Panc1 (cell line): ENCODE measurements at regions of chr4 and their contacts with region 1.

Region 1: DNA sequence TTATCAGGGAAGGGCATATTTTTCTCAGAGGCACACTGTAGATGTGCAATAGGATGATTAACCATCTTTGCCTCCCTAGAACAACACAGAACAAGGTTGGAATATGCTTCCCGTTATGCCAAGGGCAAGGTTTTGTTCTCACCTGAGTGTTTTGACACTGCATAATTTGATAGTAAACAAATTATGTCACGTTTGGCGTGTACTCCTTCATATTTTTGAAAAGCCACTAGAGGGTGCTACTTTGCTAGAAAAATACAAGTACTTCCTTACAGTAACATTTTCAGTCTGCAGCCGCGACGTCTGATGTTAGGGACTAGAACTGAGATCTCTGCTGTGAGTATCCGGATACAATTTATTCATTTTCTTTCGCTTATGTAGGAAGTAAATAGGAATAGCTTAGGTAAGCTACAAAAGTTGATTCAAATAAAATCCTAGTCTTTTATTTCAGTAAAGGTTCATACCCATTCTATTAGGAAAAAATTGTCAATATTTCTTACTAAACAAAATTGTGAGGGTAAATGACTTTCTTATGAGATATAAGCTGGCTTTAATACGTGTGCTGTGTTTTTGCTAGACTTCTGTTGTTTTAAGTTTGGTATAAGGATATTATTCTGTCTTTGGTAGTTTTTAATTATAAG is 181.1 kb upstream of the WDFY3 start:
- DNase-seq: peak; percentile 39
- ATAC-seq: peak; percentile 92
- H3K4me3 ChIP-seq: no peak overlapping the region
- H3K27ac ChIP-seq: peak overlapping the region; percentile 69; the same call in 1 of the 2 replicates
- H3K4me1 ChIP-seq: peaks cover 3% of the 10 kb centered on the region; the same call in 1 of the 2 replicates
- H3K27me3 ChIP-seq: no peaks in the 10 kb centered on the region
- CTCF ChIP-seq: peak; percentile 58; the same call in 1 of the 2 replicates

Region 2: GRCh38 chr4:85107553-85107952 is 40.0 kb before region 1 on chr4:
- CTCF ChIA-PET with region 1: no interaction called
- POLR2A ChIA-PET with region 1: no interaction called
- in situ Hi-C with region 1: no loop called
- intact Hi-C with region 1: no loop called
- DNase-seq: no peak
- ATAC-seq: no peak
- H3K4me3 ChIP-seq: no peak overlapping the region
- H3K27ac ChIP-seq: no peak overlapping the region
- H3K4me1 ChIP-seq: no peaks in the 10 kb centered on the region
- H3K27me3 ChIP-seq: no peaks in the 10 kb centered on the region
- CTCF ChIP-seq: no peak

Region 3: GRCh38 chr4:85370430-85371032 is 223.0 kb after region 1 on chr4:
- CTCF ChIA-PET with region 1: no interaction called
- POLR2A ChIA-PET with region 1: no interaction called
- in situ Hi-C with region 1: no loop called
- intact Hi-C with region 1: loop called (anchors 2 kb)
- DNase-seq: peak; percentile 35
- ATAC-seq: peak; percentile 85
- H3K4me3 ChIP-seq: no peak overlapping the region
- H3K27ac ChIP-seq: no peak overlapping the region
- H3K4me1 ChIP-seq: no peaks in the 10 kb centered on the region
- H3K27me3 ChIP-seq: no peaks in the 10 kb centered on the region
- CTCF ChIP-seq: peak; percentile 78

Region 4: GRCh38 chr4:85474818-85475630 is 327.5 kb after region 1 on chr4 and contains the start of gene ARHGAP24:
- CTCF ChIA-PET with region 1: no interaction called
- POLR2A ChIA-PET with region 1: no interaction called
- in situ Hi-C with region 1: no loop called
- intact Hi-C with region 1: loop called (anchors 5 kb)
- DNase-seq: no peak
- ATAC-seq: peak; percentile 94
- H3K4me3 ChIP-seq: peak within 1 kb of the TSS; percentile 64 to 83
- H3K27ac ChIP-seq: peak within 1 kb of the TSS; percentile 98
- H3K4me1 ChIP-seq: peaks cover 35% of the 10 kb centered on the region
- H3K27me3 ChIP-seq: no peaks in the 10 kb centered on the region
- CTCF ChIP-seq: no peak
- total RNA-seq, gene ARHGAP24: 17.4 TPM